ENCODE measurements at regions of chr4 and their contacts with region 1.

Region 1: DNA sequence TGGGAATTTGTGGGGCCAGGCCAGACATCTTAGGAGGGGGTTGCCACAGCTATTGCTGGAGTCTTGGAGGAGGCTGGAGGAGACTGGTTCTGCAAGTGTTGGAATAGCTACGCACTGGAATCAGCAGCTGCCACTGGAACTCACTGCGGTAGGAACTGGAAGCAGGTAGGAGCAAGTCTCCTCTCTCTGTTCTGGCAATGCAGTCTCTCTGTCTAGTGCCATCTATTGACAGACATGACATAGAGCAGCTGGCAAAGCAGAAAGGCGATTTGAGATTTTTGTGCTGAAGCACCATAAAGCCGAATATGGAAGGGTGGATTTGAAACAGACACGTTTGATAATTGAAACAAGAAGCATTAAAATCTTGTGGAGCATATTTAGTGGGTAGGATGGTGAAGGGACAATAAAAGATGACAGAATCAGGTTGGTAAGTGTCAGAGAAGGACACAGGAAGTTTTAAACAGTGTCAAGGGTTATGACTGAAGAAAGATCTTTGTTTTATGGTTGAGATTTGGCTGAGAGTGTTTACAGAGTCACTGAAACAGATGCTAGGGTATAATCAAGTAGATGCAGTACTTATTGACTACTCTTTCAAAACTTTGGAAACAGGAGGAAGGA is 23.5 kb upstream of the SYNPO2 start:
- DNase-seq: peak; percentile 29
- H3K4me3 Mint-ChIP-seq: no peak overlapping the region
- H3K27ac Mint-ChIP-seq: no peak overlapping the region
- H3K4me1 Mint-ChIP-seq: no peaks in the 10 kb centered on the region
- H3K27me3 Mint-ChIP-seq: no peaks in the 10 kb centered on the region

Region 2: DNA sequence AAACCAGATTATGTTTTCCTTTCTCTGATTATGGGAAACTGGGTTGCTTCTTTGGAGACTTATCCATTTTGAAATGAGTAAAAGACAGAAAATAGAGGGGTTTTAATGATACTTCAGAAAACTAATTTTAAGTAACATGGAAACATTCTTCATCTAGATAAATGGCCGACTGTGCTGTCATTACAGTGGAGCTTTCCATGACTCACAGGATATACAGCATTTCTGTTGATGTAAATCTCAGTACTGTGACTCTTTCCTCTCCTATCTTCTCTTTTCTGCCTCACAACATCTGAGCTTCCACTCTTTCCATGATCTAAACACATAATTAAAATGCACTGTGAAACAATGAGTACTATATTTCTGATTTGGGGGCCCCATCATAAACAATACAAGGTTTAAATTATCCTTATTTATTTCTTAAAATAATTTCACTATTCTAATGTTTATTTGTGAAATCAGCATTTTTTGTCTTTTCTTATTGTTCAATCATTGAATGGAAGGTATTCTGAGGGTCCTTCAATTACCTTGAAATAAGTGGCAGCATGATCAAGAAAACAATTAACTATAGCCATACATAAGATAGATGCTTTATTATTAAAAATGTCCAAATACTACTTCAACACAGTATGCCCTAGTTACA is 48.5 kb before region 1 on chr4:
- CTCF ChIA-PET with region 1: interaction called, 4 read pairs
- intact Hi-C with region 1: loop called (anchors 5 kb)
- DNase-seq: no peak
- H3K4me3 Mint-ChIP-seq: no peak overlapping the region
- H3K27ac Mint-ChIP-seq: no peak overlapping the region
- H3K4me1 Mint-ChIP-seq: no peaks in the 10 kb centered on the region
- H3K27me3 Mint-ChIP-seq: no peaks in the 10 kb centered on the region

Region 3: GRCh38 chr4:118850488-118851173 is 14.6 kb before region 1 on chr4:
- CTCF ChIA-PET with region 1: interaction called, 25 read pairs
- intact Hi-C with region 1: no loop called
- DNase-seq: peak; percentile 50
- H3K4me3 Mint-ChIP-seq: peak overlapping the region; percentile 87
- H3K27ac Mint-ChIP-seq: peak overlapping the region; percentile 84
- H3K4me1 Mint-ChIP-seq: peaks cover 18% of the 10 kb centered on the region
- H3K27me3 Mint-ChIP-seq: no peaks in the 10 kb centered on the region